GM10248 (cell line): ENCODE measurements at regions of chr10 and their contacts with region 1.

Region 1: DNA sequence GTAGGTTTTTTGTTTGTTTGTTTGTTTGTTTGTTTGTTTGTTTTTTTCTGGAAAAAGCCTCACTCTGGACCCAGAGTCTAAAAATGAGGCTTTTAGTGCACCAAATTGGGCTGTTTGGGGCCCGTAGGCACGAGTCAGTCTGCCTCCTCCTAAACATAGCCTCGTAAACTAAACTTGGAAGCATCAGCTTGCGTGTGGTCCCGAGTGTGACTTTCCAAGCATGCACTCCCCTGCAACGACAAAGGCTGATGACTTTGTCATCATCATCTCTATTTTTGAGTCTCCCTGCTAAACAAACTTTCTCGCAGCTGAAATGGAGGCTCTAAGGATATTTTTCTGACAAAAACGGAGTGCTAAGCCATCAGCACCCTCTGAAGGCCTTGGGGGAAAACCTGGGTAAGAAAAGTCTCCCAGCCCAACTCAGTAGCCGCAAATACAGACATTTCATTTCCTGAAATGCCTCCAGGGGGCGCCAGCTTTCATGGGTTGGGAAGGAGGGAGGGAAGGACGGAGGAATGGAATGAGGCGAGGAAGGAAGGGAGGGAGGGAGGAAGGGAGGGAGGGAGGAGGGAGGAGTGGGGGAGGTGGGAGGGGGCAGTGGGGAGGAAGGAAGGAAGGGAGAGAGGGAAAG is 245.9 kb downstream of the KCNMA1 start:
- DNase-seq: peak; percentile 51
- CTCF ChIP-seq: peak; percentile 66

Region 2: DNA sequence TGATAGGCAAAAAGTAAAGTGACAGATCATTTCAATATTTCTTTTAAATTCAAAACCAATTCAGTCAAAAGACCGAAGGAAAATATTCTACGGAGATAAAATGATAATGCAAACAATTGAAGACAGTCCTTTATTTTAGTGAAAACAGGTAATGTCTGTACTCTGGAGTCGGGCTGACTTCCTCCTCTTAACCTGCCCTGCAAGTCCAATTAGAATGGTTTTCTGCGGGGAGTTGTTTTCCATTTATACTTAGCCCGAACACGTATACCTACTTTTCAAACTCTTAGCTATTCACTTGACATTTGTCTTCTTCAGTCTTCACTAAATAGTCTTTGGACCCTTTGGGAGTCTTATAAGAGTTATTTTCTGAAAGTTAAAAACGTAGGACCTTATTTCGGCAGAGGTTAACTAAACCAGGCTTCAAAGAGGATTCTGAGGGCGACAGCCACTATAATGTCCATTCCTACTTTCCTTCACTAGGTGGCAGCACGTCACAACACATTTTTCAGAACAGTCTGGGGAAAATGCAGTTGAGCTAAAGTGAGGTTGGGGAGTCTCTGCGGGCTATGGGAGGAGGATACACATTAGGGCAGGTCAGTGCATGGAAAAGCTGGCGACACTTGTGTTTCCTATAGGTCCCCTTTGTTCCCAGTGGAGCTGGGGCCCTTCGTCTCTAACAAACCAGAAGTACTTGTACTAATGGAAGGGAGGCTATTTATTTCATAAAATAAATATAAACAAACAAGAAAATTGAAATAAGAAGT is 226.1 kb before region 1 on chr10:
- CTCF ChIA-PET with region 1: interaction called, 10 read pairs
- POLR2A ChIA-PET with region 1: no interaction called
- DNase-seq: peak; percentile 27
- CTCF ChIP-seq: peak; percentile 76

Region 3: GRCh38 chr10:77347052-77347451 is 44.7 kb before region 1 on chr10:
- CTCF ChIA-PET with region 1: no interaction called
- POLR2A ChIA-PET with region 1: no interaction called
- DNase-seq: no peak
- CTCF ChIP-seq: no peak

Region 4: GRCh38 chr10:77405771-77406241 is 14.1 kb after region 1 on chr10:
- CTCF ChIA-PET with region 1: interaction called, 16 read pairs
- POLR2A ChIA-PET with region 1: no interaction called
- DNase-seq: peak; percentile 45
- CTCF ChIP-seq: no peak